ENCODE measurements at regions of chr16 and their contacts with region 1.

Region 1: DNA sequence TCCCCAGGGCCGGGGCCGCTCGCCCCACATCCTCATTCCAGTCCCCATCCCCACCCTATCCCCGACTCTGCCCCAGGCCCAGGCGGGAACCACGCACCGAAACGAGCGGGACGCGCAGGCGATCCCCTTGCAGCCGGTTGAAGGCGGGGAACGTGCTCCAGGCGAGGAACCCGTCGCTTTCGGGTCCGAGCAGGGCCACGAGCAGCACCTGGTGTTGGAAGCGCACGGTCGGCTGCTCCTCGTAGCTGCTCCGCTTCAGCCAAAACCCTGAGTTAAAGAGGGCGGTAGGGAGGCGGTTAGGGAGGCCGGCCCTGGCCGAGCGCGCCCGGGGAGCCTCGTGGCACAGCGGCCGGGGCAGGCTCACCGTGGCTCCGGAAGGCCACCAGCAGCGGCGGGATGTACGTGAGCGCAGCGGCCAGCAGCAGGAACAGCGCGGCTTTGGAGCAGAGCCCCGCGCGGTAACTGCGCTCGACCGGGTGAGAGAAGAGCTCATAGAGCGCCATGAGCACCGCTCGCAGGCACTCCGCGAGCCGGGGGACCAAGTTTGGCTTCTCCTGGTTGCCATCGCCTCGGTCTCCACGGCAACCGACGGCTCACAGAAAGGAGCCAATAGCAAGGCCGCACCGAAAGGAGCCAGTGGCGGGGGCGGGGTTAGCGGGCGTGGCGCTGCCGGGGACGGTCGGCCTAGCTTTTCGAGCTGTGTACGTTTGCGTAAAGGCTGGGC is at the start of gene TMEM231:
- DNase-seq: peak; percentile 99
- H3K4me3 Mint-ChIP-seq: peak within 1 kb of the TSS; percentile 92
- H3K27ac Mint-ChIP-seq: peak within 1 kb of the TSS; percentile 90
- H3K4me1 Mint-ChIP-seq: peaks cover 8% of the 10 kb centered on the region
- H3K27me3 Mint-ChIP-seq: peaks cover 20% of the 10 kb centered on the region
- total RNA-seq, gene TMEM231: 4.0 and 4.4 TPM in 2 replicates

Region 2: DNA sequence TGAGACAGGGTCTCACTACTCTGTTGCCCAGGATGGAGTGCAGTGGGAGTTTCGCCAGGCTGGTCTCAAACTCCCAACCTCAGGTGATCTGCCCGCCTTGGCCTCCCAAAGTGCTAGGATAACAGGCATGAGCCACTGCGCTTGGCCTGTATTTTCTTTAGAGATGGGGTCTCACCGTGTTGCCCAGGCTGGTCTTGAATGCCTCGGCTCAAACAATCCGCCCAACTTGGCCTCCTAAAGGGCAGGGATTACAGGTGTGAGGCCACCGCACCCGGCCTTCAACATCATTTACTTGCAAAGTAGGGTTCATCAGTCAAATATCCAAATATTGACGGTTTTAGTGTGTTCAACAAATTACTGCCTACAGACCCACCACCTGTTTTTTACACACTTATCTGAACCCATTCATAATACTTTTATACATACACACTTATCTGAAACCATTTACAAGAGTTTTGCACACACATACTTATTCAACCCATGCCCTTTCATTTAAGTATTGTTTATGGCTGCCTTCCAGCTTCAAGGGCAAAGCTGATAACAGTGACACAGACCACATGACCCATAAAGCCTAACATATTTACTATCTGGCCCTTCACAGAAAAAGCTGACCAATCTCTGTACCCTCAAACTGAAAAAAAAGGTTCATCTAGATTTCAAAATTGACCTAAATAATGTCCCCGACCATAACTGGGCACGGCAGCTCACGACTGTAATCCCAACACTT is 103.2 kb before region 1 on chr16:
- intact Hi-C with region 1: no loop called
- DNase-seq: no peak
- H3K4me3 Mint-ChIP-seq: no peak overlapping the region
- H3K27ac Mint-ChIP-seq: no peak overlapping the region
- H3K4me1 Mint-ChIP-seq: peaks cover 5% of the 10 kb centered on the region
- H3K27me3 Mint-ChIP-seq: no peaks in the 10 kb centered on the region

Region 3: DNA sequence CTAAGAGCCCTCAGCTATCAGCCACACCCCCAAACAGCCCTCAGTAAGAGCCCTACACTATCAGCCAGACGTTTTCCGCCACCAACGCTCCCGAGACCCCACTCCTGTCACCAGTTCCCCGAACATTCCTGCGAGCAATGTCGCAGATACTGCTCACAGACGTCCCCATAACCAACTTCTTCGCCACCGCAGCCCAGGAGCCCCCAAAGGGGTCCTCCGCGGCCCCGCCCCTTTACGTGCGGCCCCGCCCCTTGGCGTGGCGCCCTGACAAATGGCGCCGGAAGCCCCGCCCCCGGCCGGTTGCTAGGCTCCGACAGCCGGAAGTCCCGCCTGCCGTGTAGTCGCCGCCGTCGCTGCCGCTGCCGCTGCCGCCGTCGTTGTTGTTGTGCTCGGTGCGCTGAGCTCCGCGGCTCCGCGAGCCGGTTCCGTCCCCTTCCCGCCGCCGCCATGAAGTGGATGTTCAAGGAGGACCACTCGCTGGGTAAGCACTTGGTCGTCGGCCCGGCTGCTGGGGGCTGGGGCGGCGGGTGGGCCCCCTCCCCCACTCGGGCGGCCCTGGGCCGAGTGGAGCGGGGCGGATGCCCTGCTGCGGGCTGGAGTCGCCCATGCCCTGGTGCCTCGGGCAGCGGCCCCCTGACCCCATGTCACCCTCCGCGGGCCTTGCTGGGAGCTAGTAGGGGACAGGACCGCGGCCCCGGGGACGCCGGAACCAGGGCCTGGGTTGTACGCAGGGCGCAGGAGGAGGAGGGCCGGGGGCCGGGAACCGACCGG is 10.4 kb after region 1 on chr16 and contains the start of gene GABARAPL2:
- intact Hi-C with region 1: loop called (anchors 1 kb)
- DNase-seq: peak; percentile 98
- H3K4me3 Mint-ChIP-seq: peak within 1 kb of the TSS; percentile 90
- H3K27ac Mint-ChIP-seq: peak within 1 kb of the TSS; percentile 87
- H3K4me1 Mint-ChIP-seq: peaks cover 28% of the 10 kb centered on the region
- H3K27me3 Mint-ChIP-seq: peaks cover 14% of the 10 kb centered on the region
- total RNA-seq, gene GABARAPL2: 69.9 and 70.4 TPM in 2 replicates

Region 4: DNA sequence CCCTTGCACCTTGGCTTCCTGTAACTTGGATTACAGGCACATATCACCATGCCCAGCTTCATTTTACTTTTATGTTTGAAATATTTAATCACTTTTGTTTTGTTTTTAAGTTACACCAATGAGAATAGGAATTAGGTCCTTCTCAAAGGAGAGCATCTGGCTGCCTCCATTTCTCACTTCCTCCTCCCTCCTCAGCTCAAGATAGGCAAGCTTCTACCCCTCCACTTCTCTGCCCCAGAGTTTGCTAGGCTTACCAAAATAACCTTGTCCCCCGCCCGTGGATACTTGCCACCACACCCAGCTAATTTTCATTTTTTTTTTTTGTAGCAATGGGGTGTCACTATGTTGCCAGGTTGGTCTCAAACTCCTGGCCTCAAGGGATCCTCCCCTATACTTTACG is 28.2 kb after region 1 on chr16:
- intact Hi-C with region 1: no loop called
- DNase-seq: no peak
- H3K4me3 Mint-ChIP-seq: no peak overlapping the region
- H3K27ac Mint-ChIP-seq: no peak overlapping the region
- H3K4me1 Mint-ChIP-seq: peaks cover 7% of the 10 kb centered on the region
- H3K27me3 Mint-ChIP-seq: no peaks in the 10 kb centered on the region